IMR-90 (cell line): ENCODE measurements at regions of chr6 and their contacts with region 1.

Region 1: GRCh38 chr6:95203153-95203754 is 374.1 kb upstream of the MANEA start:
- DNase-seq: peak; percentile 45
- ATAC-seq: peak; percentile 91
- H3K4me3 ChIP-seq: no peak overlapping the region
- H3K27ac ChIP-seq: no peak overlapping the region
- H3K4me1 ChIP-seq: no peaks in the 10 kb centered on the region
- H3K27me3 ChIP-seq: no peaks in the 10 kb centered on the region
- CTCF ChIP-seq: peak; percentile 67
- POLR2A ChIP-seq: no peak
- RAD21 ChIP-seq: peak; percentile 58

Region 2: GRCh38 chr6:93419304-93420162 is 1783.7 kb before region 1 on chr6 and contains the start of gene EPHA7:
- CTCF ChIA-PET with region 1: no interaction called
- POLR2A ChIA-PET with region 1: no interaction called
- dilution Hi-C with region 1: no loop called
- in situ Hi-C with region 1: no loop called
- intact Hi-C with region 1: no loop called
- DNase-seq: peak; percentile 76
- ATAC-seq: peak; percentile 98
- H3K4me3 ChIP-seq: peak within 1 kb of the TSS; percentile 32
- H3K27ac ChIP-seq: no peak within 1 kb of the TSS
- H3K4me1 ChIP-seq: no peaks in the 10 kb centered on the region; the same call in 1 of the 2 replicates
- H3K27me3 ChIP-seq: peaks cover 29% of the 10 kb centered on the region
- CTCF ChIP-seq: no peak
- POLR2A ChIP-seq: no peak
- RAD21 ChIP-seq: no peak
- total RNA-seq, gene EPHA7: not detected in 2 replicates

Region 3: GRCh38 chr6:94902974-94903600 is 300.2 kb before region 1 on chr6:
- CTCF ChIA-PET with region 1: no interaction called
- POLR2A ChIA-PET with region 1: no interaction called
- dilution Hi-C with region 1: no loop called
- in situ Hi-C with region 1: no loop called
- intact Hi-C with region 1: no loop called
- DNase-seq: no peak
- ATAC-seq: no peak
- H3K4me3 ChIP-seq: no peak overlapping the region
- H3K27ac ChIP-seq: no peak overlapping the region
- H3K4me1 ChIP-seq: no peaks in the 10 kb centered on the region
- H3K27me3 ChIP-seq: no peaks in the 10 kb centered on the region
- CTCF ChIP-seq: no peak
- POLR2A ChIP-seq: no peak
- RAD21 ChIP-seq: no peak

Region 4: GRCh38 chr6:95248499-95248898 is 45.2 kb after region 1 on chr6:
- CTCF ChIA-PET with region 1: interaction called, 5 read pairs
- POLR2A ChIA-PET with region 1: no interaction called
- dilution Hi-C with region 1: no loop called
- in situ Hi-C with region 1: no loop called
- intact Hi-C with region 1: loop called (anchors 1 kb)
- DNase-seq: peak; percentile 52
- ATAC-seq: peak; percentile 82
- H3K4me3 ChIP-seq: no peak overlapping the region
- H3K27ac ChIP-seq: peak overlapping the region; percentile 91; the same call in 1 of the 2 replicates
- H3K4me1 ChIP-seq: no peaks in the 10 kb centered on the region; the same call in 1 of the 2 replicates
- H3K27me3 ChIP-seq: no peaks in the 10 kb centered on the region
- CTCF ChIP-seq: peak; percentile 42
- POLR2A ChIP-seq: no peak
- RAD21 ChIP-seq: peak; percentile 25; the same call in 1 of the 2 replicates

Region 5: GRCh38 chr6:95280690-95281273 is 77.5 kb after region 1 on chr6:
- CTCF ChIA-PET with region 1: interaction called, 3 read pairs
- POLR2A ChIA-PET with region 1: no interaction called
- dilution Hi-C with region 1: no loop called
- in situ Hi-C with region 1: no loop called
- intact Hi-C with region 1: loop called (anchors 1 kb)
- DNase-seq: peak; percentile 36
- ATAC-seq: 0 out of 2 replicates have a peak, but pooled peaks have one; percentile 32
- H3K4me3 ChIP-seq: no peak overlapping the region
- H3K27ac ChIP-seq: no peak overlapping the region
- H3K4me1 ChIP-seq: no peaks in the 10 kb centered on the region
- H3K27me3 ChIP-seq: no peaks in the 10 kb centered on the region
- CTCF ChIP-seq: peak; percentile 35
- POLR2A ChIP-seq: no peak
- RAD21 ChIP-seq: peak; percentile 36

Region 6: GRCh38 chr6:95352064-95352795 is 149.0 kb after region 1 on chr6:
- CTCF ChIA-PET with region 1: no interaction called
- POLR2A ChIA-PET with region 1: no interaction called
- dilution Hi-C with region 1: no loop called
- in situ Hi-C with region 1: no loop called
- intact Hi-C with region 1: loop called (anchors 5 kb)
- DNase-seq: no peak
- ATAC-seq: no peak
- H3K4me3 ChIP-seq: no peak overlapping the region
- H3K27ac ChIP-seq: no peak overlapping the region
- H3K4me1 ChIP-seq: no peaks in the 10 kb centered on the region
- H3K27me3 ChIP-seq: no peaks in the 10 kb centered on the region
- CTCF ChIP-seq: peak; percentile 13; the same call in 1 of the 2 replicates
- POLR2A ChIP-seq: no peak
- RAD21 ChIP-seq: no peak; the same call in 1 of the 2 replicates